ENCODE measurements at regions of chr6 and their contacts with region 1.

Region 1: DNA sequence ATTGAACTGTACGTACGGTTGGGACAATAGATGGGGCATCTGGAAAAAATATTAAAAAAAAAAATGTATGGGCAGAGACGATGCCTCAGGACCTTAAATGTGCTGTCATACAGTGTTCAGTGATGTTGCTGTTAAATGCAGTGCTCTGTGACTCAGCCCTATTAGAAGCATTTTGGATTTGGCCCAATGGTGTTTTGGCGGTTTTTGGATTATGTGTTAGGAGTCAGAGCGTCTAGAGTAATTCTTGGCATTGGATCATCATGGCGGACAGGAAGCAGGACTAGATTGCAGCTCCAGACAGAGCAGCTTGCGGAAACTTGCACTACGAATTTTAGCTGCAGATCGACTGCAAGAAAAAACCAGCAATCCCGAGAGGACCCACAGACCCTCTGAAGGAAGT is 280.0 kb downstream of the SOX4 start:
- DNase-seq: no peak
- ATAC-seq: no peak
- H3K4me3 ChIP-seq: no peak overlapping the region
- H3K27ac ChIP-seq: no peak overlapping the region
- H3K4me1 ChIP-seq: no peaks in the 10 kb centered on the region
- H3K27me3 ChIP-seq: no peaks in the 10 kb centered on the region
- CTCF ChIP-seq: no peak

Region 2: DNA sequence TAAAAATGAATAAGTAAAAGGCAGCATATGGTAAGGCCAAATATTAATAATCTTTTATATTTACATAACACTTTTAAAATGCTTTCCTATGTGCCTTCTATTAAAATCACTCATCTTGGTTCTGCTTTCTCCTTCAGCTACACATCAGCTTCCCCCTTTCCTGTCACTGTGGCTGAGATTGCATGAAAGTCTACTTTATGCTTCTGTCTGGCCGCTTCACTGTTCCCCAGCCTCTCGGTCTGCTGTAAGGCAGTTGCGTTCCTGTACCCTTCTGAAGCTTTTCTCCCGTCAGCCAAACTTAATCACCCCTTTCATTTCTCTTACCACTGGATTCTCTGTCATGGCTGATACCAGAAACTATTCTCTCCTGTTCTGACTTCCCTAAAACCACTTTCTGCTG is 245.4 kb before region 1 on chr6:
- CTCF ChIA-PET with region 1: no interaction called
- POLR2A ChIA-PET with region 1: no interaction called
- in situ Hi-C with region 1: no loop called
- intact Hi-C with region 1: no loop called
- DNase-seq: no peak
- ATAC-seq: no peak
- H3K4me3 ChIP-seq: no peak overlapping the region
- H3K27ac ChIP-seq: no peak overlapping the region
- H3K4me1 ChIP-seq: no peaks in the 10 kb centered on the region
- H3K27me3 ChIP-seq: no peaks in the 10 kb centered on the region
- CTCF ChIP-seq: no peak

Region 3: GRCh38 chr6:21836772-21837425 is 36.7 kb before region 1 on chr6:
- CTCF ChIA-PET with region 1: no interaction called
- POLR2A ChIA-PET with region 1: no interaction called
- in situ Hi-C with region 1: no loop called
- intact Hi-C with region 1: no loop called
- DNase-seq: no peak
- ATAC-seq: no peak
- H3K4me3 ChIP-seq: no peak overlapping the region
- H3K27ac ChIP-seq: no peak overlapping the region
- H3K4me1 ChIP-seq: no peaks in the 10 kb centered on the region
- H3K27me3 ChIP-seq: no peaks in the 10 kb centered on the region
- CTCF ChIP-seq: no peak

Region 4: DNA sequence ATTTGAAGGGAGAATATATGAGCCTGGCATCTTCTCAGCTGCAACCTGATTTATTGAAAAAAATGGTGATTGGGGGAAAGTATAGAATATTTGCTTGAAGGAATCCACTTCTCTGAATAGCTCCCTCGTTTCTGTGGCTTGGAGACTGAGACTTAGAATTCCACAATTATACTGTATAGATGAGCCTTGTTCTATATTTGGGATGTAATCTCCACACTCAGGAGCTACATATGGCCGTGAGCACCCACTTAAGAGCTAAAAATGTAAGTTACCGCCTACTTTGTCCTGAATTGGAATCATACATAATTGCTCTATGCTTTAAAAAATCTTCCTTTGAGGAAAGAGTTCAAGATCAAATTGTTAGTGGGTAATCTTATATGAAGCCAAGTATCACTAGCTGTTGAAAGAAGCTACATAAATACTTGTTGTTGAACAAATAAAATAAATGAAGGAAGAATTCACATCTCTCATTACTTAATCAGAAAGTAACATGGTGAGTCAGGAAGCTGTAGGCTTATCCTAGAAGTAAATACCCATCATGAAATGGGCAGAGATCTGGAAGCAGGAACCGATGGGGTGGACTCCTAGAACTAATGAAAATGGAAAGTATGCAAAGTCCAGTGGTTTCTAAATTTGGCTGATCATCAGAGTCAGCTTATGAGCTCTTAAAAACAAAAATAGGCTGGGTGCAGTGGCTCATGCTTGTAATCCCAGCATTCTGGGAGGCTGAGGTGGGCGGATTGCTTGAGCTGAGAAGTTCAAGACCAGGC is 25.7 kb before region 1 on chr6:
- CTCF ChIA-PET with region 1: interaction called, 13 read pairs
- POLR2A ChIA-PET with region 1: no interaction called
- in situ Hi-C with region 1: no loop called
- intact Hi-C with region 1: no loop called
- DNase-seq: no peak
- ATAC-seq: no peak
- H3K4me3 ChIP-seq: no peak overlapping the region
- H3K27ac ChIP-seq: no peak overlapping the region
- H3K4me1 ChIP-seq: no peaks in the 10 kb centered on the region
- H3K27me3 ChIP-seq: no peaks in the 10 kb centered on the region
- CTCF ChIP-seq: no peak